ENCODE measurements at regions of chr14 and their contacts with region 1.

Region 1: DNA sequence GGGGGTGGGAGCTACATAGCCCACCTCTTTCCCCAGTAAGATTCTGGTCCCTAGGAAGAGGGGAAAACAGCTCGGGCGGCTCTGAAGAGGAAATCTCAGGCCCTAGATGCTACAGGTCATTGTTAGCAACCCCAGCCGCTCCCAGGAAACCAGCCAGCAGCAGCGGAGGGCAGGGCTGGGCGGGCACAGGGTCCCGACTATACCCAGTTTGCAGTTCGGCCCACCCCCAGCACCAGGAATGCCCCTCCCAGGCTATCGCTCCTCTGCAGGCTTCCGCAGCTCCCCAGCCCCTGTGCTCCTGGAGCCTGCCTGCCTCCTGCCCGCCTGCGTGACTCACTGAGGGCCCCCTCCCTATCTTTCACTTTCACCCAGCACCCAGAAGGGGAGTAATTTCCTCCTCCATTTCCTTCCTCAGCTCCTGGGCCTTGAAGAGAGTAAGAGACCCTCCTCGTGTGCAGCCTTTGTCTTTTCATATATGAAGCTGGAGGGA is 27.2 kb upstream of the PNMA1 start:
- DNase-seq: peak; percentile 75
- CTCF ChIP-seq: no peak

Region 2: GRCh38 chr14:73644531-73645247 is 96.7 kb before region 1 on chr14 and contains the start of gene DNAL1:
- CTCF ChIA-PET with region 1: no interaction called
- POLR2A ChIA-PET with region 1: no interaction called
- DNase-seq: peak; percentile 99
- CTCF ChIP-seq: no peak

Region 3: GRCh38 chr14:73685328-73685727 is 56.1 kb before region 1 on chr14:
- CTCF ChIA-PET with region 1: no interaction called
- POLR2A ChIA-PET with region 1: no interaction called
- DNase-seq: no peak
- CTCF ChIP-seq: no peak

Region 4: GRCh38 chr14:73753959-73754882 is 12.8 kb after region 1 on chr14:
- CTCF ChIA-PET with region 1: interaction called, 102 read pairs
- POLR2A ChIA-PET with region 1: interaction called, 26 read pairs
- DNase-seq: peak; percentile 73
- CTCF ChIP-seq: no peak

Region 5: GRCh38 chr14:73807467-73807866 is 66.0 kb after region 1 on chr14:
- CTCF ChIA-PET with region 1: no interaction called
- POLR2A ChIA-PET with region 1: no interaction called
- DNase-seq: no peak
- CTCF ChIP-seq: no peak

Measured in GM10248 (cell line).